MCF 10A (cell line): ENCODE measurements at regions of chr11 and their contacts with region 1.

Region 1: GRCh38 chr11:14358729-14359439 is at the start of gene RRAS2:
- DNase-seq: peak; percentile 74
- H3K4me3 Mint-ChIP-seq: peak within 1 kb of the TSS; percentile 94
- H3K27ac Mint-ChIP-seq: peak within 1 kb of the TSS; percentile 97
- H3K4me1 Mint-ChIP-seq: peaks cover 32% of the 10 kb centered on the region
- H3K27me3 Mint-ChIP-seq: no peaks in the 10 kb centered on the region
- CTCF ChIP-seq: no peak
- total RNA-seq, gene RRAS2: 128 and 145 TPM in 2 replicates

Region 2: DNA sequence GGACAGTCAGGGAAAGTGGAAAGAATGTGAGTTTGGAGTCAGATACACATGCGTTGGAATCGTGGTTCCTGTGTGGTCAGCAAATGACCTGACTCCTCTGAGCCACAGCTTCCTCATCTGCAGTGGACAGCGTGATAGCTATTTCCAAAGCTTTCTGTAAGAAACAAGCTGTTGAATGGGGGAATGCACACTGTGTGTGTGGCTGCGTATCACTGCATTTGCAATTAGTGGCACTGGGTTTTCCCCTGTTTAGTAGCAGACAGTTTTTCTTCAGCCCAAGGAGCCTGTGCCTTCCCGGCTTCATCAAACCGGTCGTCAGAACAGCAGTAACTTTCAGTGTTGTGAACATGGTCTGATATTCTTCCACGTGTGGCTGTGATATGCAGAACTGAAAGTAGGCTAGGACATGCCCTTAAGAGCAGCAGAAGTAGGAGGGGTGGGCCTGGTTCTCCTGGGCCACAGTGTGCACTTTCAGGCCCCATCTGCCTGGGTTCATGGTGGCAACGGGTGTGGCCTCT is 121.4 kb before region 1 on chr11:
- CTCF ChIA-PET with region 1: no interaction called
- POLR2A ChIA-PET with region 1: no interaction called
- intact Hi-C with region 1: no loop called
- DNase-seq: no peak
- H3K4me3 Mint-ChIP-seq: no peak overlapping the region
- H3K27ac Mint-ChIP-seq: no peak overlapping the region
- H3K4me1 Mint-ChIP-seq: no peaks in the 10 kb centered on the region
- H3K27me3 Mint-ChIP-seq: peaks cover 71% of the 10 kb centered on the region
- CTCF ChIP-seq: no peak

Region 3: DNA sequence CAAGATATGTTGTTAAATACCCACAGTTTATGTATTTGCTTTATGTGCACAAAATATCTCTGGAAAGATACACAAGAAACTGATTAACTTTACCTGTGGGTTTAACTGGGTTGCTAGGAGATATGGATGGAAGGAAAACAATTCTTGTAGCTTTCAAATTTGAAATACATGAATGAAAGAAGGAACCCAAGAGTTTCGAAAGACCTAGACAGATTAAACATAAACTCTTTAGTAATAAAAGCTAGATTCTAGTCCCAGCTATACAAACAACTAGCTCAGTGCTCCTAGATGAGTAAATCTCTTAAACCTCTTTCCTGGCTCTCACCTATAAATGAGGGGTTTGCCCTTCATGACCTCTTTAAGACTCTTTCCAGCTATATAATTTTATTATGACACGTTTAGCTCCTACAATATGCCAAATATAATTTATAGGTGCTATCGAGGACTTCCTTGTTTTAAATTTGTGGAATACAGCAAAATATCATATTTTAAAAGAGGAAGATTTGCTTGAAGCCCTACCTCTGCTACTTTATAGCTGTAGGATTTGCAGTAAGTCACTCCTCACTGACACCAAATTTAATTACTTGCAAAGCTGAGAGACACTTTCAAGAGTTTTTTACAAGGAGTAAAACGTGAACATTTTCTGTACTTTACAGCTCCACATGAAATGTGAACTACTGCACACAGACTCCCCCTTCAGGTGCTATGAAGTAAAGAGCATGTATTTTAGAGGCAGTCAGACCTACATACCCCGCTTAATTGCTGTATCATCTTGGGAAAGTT is 50.6 kb before region 1 on chr11:
- CTCF ChIA-PET with region 1: interaction called, 22 read pairs
- POLR2A ChIA-PET with region 1: interaction called, 24 read pairs
- intact Hi-C with region 1: loop called (anchors 2 kb)
- DNase-seq: peak; percentile 65
- H3K4me3 Mint-ChIP-seq: no peak overlapping the region
- H3K27ac Mint-ChIP-seq: no peak overlapping the region
- H3K4me1 Mint-ChIP-seq: peaks cover 2% of the 10 kb centered on the region
- H3K27me3 Mint-ChIP-seq: no peaks in the 10 kb centered on the region
- CTCF ChIP-seq: peak; percentile 42

Region 4: GRCh38 chr11:14336507-14337503 is 22.1 kb before region 1 on chr11:
- CTCF ChIA-PET with region 1: interaction called, 4 read pairs
- POLR2A ChIA-PET with region 1: interaction called, 38 read pairs
- intact Hi-C with region 1: loop called (anchors 2 kb)
- DNase-seq: peak; percentile 97
- H3K4me3 Mint-ChIP-seq: peak overlapping the region; percentile 59
- H3K27ac Mint-ChIP-seq: peak overlapping the region; percentile 97
- H3K4me1 Mint-ChIP-seq: peaks cover 40% of the 10 kb centered on the region
- H3K27me3 Mint-ChIP-seq: no peaks in the 10 kb centered on the region
- CTCF ChIP-seq: no peak

Region 5: DNA sequence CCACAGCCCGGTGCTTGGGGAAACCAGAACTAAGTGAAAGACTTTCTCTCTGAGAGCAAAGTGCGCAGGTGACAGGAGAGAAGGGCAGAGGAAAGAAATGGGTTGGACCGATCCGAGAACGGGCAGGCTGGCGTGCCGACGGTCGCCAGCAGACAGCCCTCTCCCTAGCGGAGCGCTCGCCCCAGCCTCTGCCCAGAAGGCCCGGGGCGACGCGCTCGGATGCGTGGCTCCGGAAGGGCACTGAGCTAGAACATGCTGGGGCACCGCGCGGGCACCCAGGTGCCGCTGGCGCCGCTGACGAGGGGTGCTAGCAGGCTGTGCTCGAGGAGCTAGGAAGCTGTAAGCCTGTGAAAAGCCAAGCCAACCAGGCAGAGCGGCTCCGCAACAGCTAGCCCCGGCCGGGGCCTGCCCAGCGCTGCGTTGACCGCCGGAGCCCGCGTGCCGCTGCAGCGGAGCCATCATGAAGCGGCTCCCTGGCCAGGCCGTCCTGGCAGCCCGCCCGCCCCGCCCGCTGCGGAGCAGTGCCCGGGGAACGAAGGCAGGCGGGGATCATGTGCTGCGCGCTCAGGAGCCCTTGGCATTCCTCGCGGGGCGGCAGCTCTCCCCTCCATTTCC is 22.2 kb after region 1 on chr11:
- CTCF ChIA-PET with region 1: interaction called, 3 read pairs
- POLR2A ChIA-PET with region 1: interaction called, 10 read pairs
- intact Hi-C with region 1: no loop called
- DNase-seq: peak; percentile 73
- H3K4me3 Mint-ChIP-seq: peak overlapping the region; percentile 76
- H3K27ac Mint-ChIP-seq: peak overlapping the region; percentile 75
- H3K4me1 Mint-ChIP-seq: peaks cover 15% of the 10 kb centered on the region
- H3K27me3 Mint-ChIP-seq: no peaks in the 10 kb centered on the region
- CTCF ChIP-seq: no peak

Region 6: GRCh38 chr11:14422052-14422813 is 63.3 kb after region 1 on chr11:
- CTCF ChIA-PET with region 1: interaction called, 6 read pairs
- POLR2A ChIA-PET with region 1: interaction called, 13 read pairs
- intact Hi-C with region 1: loop called (anchors 5 kb)
- DNase-seq: peak; percentile 91
- H3K4me3 Mint-ChIP-seq: no peak overlapping the region
- H3K27ac Mint-ChIP-seq: no peak overlapping the region
- H3K4me1 Mint-ChIP-seq: peaks cover 17% of the 10 kb centered on the region
- H3K27me3 Mint-ChIP-seq: no peaks in the 10 kb centered on the region
- CTCF ChIP-seq: no peak

Region 7: DNA sequence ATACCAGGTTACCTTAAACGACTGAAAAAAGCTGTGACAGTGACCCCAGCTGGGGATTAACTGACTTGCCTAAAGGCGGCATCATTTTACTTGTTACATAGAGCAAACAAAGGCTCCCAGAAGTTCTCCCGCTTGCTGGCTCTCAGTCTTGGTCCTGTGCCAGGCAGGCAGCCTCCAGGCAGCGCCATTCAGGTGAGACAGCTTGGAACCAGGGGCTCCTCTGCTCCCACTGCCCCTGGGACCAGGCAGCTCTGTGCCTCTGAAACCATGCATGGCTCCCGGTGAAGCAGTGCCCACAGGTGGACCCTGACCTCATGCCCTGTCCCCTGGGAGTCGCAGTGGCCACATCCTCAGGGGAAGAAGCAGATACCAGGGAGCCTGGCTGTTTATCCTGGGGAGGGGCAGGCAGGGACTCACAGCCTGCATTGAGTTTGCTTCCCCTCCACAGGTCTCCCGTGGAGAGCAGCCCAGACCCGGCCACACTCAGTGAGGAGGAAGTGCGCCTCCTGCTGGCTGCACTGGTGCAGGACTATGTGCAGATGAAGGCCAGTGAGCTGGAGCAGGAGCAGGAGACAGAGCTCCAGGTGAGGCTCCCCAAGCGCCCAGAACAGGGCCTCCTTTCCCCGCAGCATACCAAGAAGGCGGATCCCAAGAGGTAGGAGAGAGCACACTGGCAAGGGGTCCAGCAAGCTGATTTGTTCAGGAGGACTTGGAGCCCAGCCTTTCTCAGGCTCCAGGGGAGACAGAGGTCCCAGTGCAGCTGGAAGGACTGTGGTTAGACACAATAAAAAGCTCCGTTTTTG is 548.7 kb after region 1 on chr11:
- CTCF ChIA-PET with region 1: no interaction called
- POLR2A ChIA-PET with region 1: no interaction called
- intact Hi-C with region 1: no loop called
- DNase-seq: peak; percentile 70
- H3K4me3 Mint-ChIP-seq: peak overlapping the region; percentile 43
- H3K27ac Mint-ChIP-seq: no peak overlapping the region
- H3K4me1 Mint-ChIP-seq: peaks cover 16% of the 10 kb centered on the region
- H3K27me3 Mint-ChIP-seq: peaks cover 22% of the 10 kb centered on the region
- CTCF ChIP-seq: peak; percentile 90